Endothelial cell of umbilical vein (primary cell): ENCODE measurements at regions of chrX and their contacts with region 1.

Region 1: DNA sequence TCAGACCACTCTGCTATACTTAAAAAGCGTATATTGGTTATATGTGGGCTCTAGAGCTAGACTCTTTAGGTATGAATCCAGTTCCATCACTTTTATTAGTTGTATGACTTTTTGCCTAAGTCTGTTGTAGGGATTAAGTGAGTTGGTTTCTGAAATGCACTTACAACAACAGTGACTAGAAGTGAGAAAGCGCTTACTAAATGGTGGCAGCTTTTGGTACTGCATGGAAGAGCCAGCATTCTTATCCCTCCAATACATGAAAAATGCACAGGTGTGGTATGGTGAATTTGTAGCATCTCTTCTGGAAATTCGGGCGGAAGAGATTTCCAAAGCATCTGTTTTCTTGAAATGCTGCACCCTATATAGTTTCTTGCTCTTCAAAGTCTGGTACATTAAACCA is 117.1 kb downstream of the SPANXA1 start:
- DNase-seq: peak; percentile 2
- H3K4me3 ChIP-seq: no peak overlapping the region
- H3K27ac ChIP-seq: no peak overlapping the region
- H3K4me1 ChIP-seq: peaks cover 21% of the 10 kb centered on the region
- H3K27me3 ChIP-seq: no peaks in the 10 kb centered on the region
- CTCF ChIP-seq: peak in 1 of 2 donors; percentile 3
- POLR2A ChIP-seq: no peak

Region 2: DNA sequence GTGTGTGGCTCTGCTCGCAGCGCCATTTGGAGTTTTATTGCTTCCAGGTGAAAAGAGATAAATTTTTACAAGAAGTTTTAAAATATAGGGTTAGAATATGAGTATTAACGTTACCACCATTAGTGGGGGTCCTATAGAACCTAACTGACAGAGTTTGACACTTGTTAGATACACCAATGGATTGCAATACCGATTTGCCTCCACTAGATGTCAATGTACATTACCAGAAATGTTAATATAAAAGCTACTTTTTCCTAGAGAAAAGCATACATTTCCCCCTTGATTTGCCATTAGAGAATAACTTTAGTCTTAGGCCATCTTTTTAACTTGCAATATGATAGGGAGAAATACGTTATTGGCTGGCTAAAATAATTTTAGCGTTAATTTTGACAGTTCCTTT is 649.5 kb before region 1 on chrX:
- CTCF ChIA-PET with region 1: no interaction called
- POLR2A ChIA-PET with region 1: no interaction called
- dilution Hi-C with region 1: no loop called
- intact Hi-C with region 1: loop called (anchors 5 kb)
- DNase-seq: peak; percentile 8
- H3K4me3 ChIP-seq: no peak overlapping the region
- H3K27ac ChIP-seq: no peak overlapping the region
- H3K4me1 ChIP-seq: no peaks in the 10 kb centered on the region
- H3K27me3 ChIP-seq: no peaks in the 10 kb centered on the region
- CTCF ChIP-seq: peak; percentile 27 to 29
- POLR2A ChIP-seq: no peak

Region 3: GRCh38 chrX:141220344-141221035 is 247.0 kb before region 1 on chrX:
- CTCF ChIA-PET with region 1: no interaction called
- POLR2A ChIA-PET with region 1: no interaction called
- dilution Hi-C with region 1: no loop called
- intact Hi-C with region 1: loop called (anchors 1 kb)
- DNase-seq: peak; percentile 69
- H3K4me3 ChIP-seq: no peak overlapping the region
- H3K27ac ChIP-seq: peak overlapping the region; percentile 73
- H3K4me1 ChIP-seq: peaks cover 16% of the 10 kb centered on the region
- H3K27me3 ChIP-seq: no peaks in the 10 kb centered on the region
- CTCF ChIP-seq: no peak
- POLR2A ChIP-seq: no peak

Region 4: GRCh38 chrX:141341341-141341740 is 126.1 kb before region 1 on chrX:
- CTCF ChIA-PET with region 1: interaction called, 8 read pairs
- POLR2A ChIA-PET with region 1: no interaction called
- dilution Hi-C with region 1: no loop called
- intact Hi-C with region 1: loop called (anchors 1 kb)
- DNase-seq: peak; percentile 90
- H3K4me3 ChIP-seq: no peak overlapping the region
- H3K27ac ChIP-seq: peak overlapping the region; percentile 77
- H3K4me1 ChIP-seq: peaks cover 25% of the 10 kb centered on the region
- H3K27me3 ChIP-seq: no peaks in the 10 kb centered on the region
- CTCF ChIP-seq: no peak
- POLR2A ChIP-seq: no peak

Region 5: GRCh38 chrX:141960573-141960972 is 493.1 kb after region 1 on chrX:
- CTCF ChIA-PET with region 1: no interaction called
- POLR2A ChIA-PET with region 1: no interaction called
- dilution Hi-C with region 1: no loop called
- intact Hi-C with region 1: loop called (anchors 5 kb)
- DNase-seq: peak; percentile 6
- H3K4me3 ChIP-seq: no peak overlapping the region
- H3K27ac ChIP-seq: no peak overlapping the region
- H3K4me1 ChIP-seq: peaks cover 13% of the 10 kb centered on the region
- H3K27me3 ChIP-seq: no peaks in the 10 kb centered on the region
- CTCF ChIP-seq: no peak
- POLR2A ChIP-seq: no peak